ENCODE measurements at regions of chr6 and their contacts with region 1.

Region 1: DNA sequence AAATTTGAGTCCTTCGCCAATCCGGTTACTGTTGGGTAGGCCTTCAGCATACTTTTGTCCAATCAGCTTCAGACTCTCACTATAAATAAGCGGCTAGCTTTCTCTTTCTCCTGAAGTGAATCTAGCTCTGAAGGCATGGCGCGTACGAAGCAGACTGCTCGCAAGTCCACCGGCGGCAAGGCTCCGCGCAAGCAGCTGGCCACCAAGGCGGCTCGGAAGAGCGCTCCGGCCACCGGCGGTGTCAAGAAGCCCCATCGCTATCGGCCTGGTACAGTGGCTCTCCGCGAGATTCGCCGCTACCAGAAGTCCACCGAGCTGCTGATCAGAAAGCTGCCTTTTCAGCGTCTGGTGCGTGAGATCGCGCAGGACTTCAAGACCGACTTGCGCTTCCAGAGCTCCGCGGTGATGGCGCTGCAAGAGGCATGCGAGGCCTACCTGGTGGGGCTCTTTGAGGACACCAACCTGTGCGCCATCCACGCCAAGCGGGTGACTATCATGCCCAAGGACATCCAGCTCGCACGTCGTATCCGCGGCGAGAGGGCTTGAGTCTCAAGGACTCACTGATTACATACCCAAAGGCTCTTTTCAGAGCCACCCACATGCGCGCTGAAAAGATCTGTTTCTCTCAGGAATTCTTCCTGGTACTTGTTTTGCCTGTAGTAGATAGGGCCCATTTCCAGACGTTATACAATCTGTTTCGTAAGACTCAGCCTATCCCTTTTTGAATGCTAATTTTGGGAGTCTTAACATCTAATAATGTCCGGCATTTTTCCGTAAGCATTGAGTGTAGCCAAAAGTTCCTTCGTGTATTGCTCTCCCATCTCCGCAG is 102.0 kb downstream of the OR2B2 start:
- DNase-seq: peak; percentile 85 to 94 (median 92)
- H3K4me3 ChIP-seq: peak overlapping the region; percentile 31 to 67
- H3K4me3 Mint-ChIP-seq: peak overlapping the region; percentile 92 to 99 (median 96)
- H3K27ac ChIP-seq: peak overlapping the region; percentile 79
- H3K27ac Mint-ChIP-seq: peak overlapping the region; percentile 94 to 98 (median 97)
- H3K4me1 ChIP-seq: peaks cover 49% of the 10 kb centered on the region
- H3K4me1 Mint-ChIP-seq: peaks cover 39 to 74% (median 50%) of the 10 kb centered on the region in 4 donors
- H3K27me3 ChIP-seq: no peaks in the 10 kb centered on the region
- H3K27me3 Mint-ChIP-seq: no peaks in the 10 kb centered on the region

Region 2: GRCh38 chr6:26054857-26055669 is 1755.1 kb before region 1 on chr6:
- CTCF ChIA-PET with region 1: no interaction called
- POLR2A ChIA-PET with region 1: interaction called, 11 read pairs
- intact Hi-C with region 1: no loop called
- DNase-seq: peak; percentile 89 to 96 (median 91)
- H3K4me3 ChIP-seq: peak overlapping the region; percentile 67 to 78
- H3K4me3 Mint-ChIP-seq: peak overlapping the region; percentile 93 to 96 (median 94)
- H3K27ac ChIP-seq: peak overlapping the region; percentile 84
- H3K27ac Mint-ChIP-seq: peak overlapping the region; percentile 91 to 98 (median 98)
- H3K4me1 ChIP-seq: peaks cover 24% of the 10 kb centered on the region
- H3K4me1 Mint-ChIP-seq: peaks cover 7 to 34% (median 15%) of the 10 kb centered on the region in 4 donors
- H3K27me3 ChIP-seq: no peaks in the 10 kb centered on the region
- H3K27me3 Mint-ChIP-seq: no peaks in the 10 kb centered on the region

Region 3: GRCh38 chr6:26249957-26250697 is 1560.0 kb before region 1 on chr6:
- CTCF ChIA-PET with region 1: no interaction called
- POLR2A ChIA-PET with region 1: interaction called, 14 read pairs
- intact Hi-C with region 1: no loop called
- DNase-seq: peak; percentile 79 to 88 (median 83)
- H3K4me3 ChIP-seq: peak overlapping the region; percentile 86 to 88
- H3K4me3 Mint-ChIP-seq: peak overlapping the region; percentile 92 to 99 (median 98)
- H3K27ac ChIP-seq: peak overlapping the region; percentile 59
- H3K27ac Mint-ChIP-seq: peak overlapping the region; percentile 85 to 97 (median 94)
- H3K4me1 ChIP-seq: peaks cover 25% of the 10 kb centered on the region
- H3K4me1 Mint-ChIP-seq: peaks cover 28 to 53% (median 40%) of the 10 kb centered on the region in 4 donors
- H3K27me3 ChIP-seq: no peaks in the 10 kb centered on the region
- H3K27me3 Mint-ChIP-seq: no peaks in the 10 kb centered on the region

Region 4: GRCh38 chr6:27132532-27133280 is 677.4 kb before region 1 on chr6:
- CTCF ChIA-PET with region 1: interaction called, 7 read pairs
- POLR2A ChIA-PET with region 1: interaction called, 143 read pairs
- intact Hi-C with region 1: loop called (anchors 1 kb)
- DNase-seq: peak; percentile 96 to 99 (median 98)
- H3K4me3 ChIP-seq: peak overlapping the region; percentile 72 to 90
- H3K4me3 Mint-ChIP-seq: no peak overlapping the region
- H3K27ac ChIP-seq: peak overlapping the region; percentile 93
- H3K27ac Mint-ChIP-seq: no peak overlapping the region
- H3K4me1 ChIP-seq: peaks cover 27% of the 10 kb centered on the region
- H3K4me1 Mint-ChIP-seq: peaks cover 0 to 24% (median 10%) of the 10 kb centered on the region in 4 donors
- H3K27me3 ChIP-seq: no peaks in the 10 kb centered on the region
- H3K27me3 Mint-ChIP-seq: no peaks in the 10 kb centered on the region

Region 5: DNA sequence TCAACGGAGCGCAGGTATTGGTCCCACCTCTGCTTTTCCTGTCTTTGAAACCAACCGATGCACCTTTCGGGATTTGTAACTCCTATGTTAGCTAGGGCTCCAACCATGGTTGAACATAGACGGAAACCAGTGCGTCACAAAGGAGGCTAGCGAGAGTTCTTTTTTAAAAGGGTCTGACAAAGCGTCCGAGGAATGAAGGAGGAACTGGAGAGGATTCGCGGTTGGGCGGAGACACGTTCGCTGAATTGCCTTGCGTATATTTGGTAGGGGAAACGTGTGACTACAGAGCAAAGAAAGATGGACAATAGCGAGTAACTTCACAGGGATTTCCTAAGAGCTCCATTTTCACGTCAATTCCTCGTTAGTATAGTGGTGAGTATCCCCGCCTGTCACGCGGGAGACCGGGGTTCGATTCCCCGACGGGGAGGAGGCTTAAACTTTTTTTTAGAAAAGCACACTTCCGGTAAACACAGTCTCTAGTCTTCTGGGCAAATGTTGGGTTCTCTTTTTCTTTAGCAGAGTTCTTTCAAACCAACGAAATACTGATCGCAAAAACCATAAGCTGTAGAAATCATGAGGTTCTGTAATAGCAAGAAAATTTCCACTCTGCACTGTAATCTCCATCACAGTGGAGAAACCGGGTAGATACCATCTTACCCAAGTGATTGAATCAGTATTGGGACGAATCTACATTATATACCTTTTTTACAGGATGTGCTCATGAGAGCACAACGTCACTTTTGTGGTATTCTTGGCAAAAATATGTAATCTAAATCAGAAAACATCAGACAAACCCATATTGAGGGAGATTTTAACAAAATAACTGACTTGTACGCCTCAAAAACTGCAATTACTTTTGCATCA is 330.6 kb before region 1 on chr6:
- CTCF ChIA-PET with region 1: no interaction called
- POLR2A ChIA-PET with region 1: interaction called, 38 read pairs
- intact Hi-C with region 1: no loop called
- DNase-seq: peak; percentile 87 to 93 (median 92)
- H3K4me3 ChIP-seq: peak overlapping the region; percentile 88 to 93
- H3K4me3 Mint-ChIP-seq: no peak overlapping the region
- H3K27ac ChIP-seq: peak overlapping the region; percentile 85
- H3K27ac Mint-ChIP-seq: no peak overlapping the region
- H3K4me1 ChIP-seq: peaks cover 17% of the 10 kb centered on the region
- H3K4me1 Mint-ChIP-seq: peaks cover 0 to 11% (median 5%) of the 10 kb centered on the region in 4 donors
- H3K27me3 ChIP-seq: no peaks in the 10 kb centered on the region
- H3K27me3 Mint-ChIP-seq: no peaks in the 10 kb centered on the region

Region 6: DNA sequence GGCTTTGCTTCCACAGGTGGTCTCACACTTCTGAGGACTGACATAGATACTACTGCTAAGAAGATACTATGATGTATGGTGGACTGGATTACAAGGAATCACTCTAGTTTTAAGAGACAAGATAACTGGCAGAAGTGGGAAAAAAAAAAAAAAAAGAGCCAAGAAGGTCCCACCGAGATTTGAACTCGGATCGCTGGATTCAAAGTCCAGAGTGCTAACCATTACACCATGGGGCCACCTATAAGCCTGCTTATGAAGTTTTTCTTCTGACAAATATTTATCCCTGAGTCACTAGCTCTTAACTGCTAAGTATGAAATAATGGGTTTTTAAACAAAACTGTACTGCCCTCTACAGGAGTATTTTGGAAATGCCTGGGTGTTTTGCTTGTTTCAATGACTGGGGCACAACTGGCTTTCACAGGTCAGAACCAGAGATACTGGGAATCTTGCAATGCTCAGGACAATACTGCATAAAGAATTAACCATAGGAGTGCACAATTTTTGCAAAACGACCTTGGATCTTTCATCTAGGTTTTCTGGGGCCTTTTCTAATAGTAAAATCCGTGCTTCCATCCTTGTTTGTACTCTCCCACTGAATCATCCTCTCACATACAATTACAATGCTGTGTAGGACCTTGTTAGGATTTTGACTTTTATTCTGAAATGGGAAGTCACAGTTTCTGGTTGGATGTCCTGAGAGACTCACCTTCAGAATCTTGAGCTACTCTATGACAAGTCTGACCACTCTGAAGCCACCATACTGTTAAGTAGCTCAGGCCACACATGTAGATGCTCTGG is 14.3 kb before region 1 on chr6:
- CTCF ChIA-PET with region 1: interaction called, 32 read pairs
- POLR2A ChIA-PET with region 1: interaction called, 20 read pairs
- intact Hi-C with region 1: no loop called
- DNase-seq: peak; percentile 75 to 82 (median 80)
- H3K4me3 ChIP-seq: no peak overlapping the region
- H3K4me3 Mint-ChIP-seq: peak overlapping the region in 1 of 8 donors; percentile 16
- H3K27ac ChIP-seq: no peak overlapping the region
- H3K27ac Mint-ChIP-seq: peak overlapping the region in 5 of 7 donors; percentile 6 to 91 (median 35)
- H3K4me1 ChIP-seq: peaks cover 21% of the 10 kb centered on the region
- H3K4me1 Mint-ChIP-seq: peaks cover 17 to 29% (median 21%) of the 10 kb centered on the region in 4 donors
- H3K27me3 ChIP-seq: peaks cover 6% of the 10 kb centered on the region
- H3K27me3 Mint-ChIP-seq: peaks cover 6 to 13% of the 10 kb centered on the region in 2 donors

Region 7: DNA sequence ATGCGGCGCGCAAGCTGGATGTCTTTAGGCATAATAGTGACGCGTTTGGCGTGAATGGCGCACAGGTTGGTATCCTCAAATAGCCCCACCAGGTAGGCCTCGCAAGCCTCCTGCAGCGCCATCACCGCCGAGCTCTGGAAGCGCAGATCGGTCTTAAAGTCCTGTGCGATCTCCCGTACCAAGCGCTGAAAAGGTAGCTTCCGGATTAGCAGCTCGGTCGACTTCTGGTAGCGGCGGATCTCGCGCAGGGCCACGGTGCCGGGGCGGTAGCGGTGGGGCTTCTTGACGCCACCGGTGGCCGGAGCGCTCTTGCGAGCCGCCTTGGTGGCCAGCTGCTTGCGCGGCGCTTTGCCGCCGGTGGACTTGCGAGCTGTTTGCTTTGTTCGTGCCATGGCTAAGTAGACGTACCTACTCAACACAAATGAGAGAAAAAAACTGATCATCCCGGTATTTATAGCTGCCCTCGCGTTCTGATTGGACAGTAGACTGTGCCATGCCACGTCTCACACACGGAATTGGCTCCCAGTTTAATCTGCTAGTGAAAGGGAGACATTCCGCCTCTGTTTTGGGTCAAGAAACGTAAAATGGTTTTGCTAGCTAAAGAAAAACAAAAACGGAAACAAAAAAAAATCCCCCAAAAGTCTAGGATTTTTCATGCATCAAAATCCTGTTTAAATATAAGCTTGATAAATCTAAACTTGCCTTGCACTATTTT is 61.9 kb after region 1 on chr6:
- CTCF ChIA-PET with region 1: interaction called, 74 read pairs
- POLR2A ChIA-PET with region 1: interaction called, 640 read pairs
- intact Hi-C with region 1: loop called (anchors 1 kb)
- DNase-seq: peak; percentile 91 to 96 (median 94)
- H3K4me3 ChIP-seq: peak overlapping the region; percentile 77 to 89
- H3K4me3 Mint-ChIP-seq: peak overlapping the region; percentile 87 to 94 (median 90)
- H3K27ac ChIP-seq: peak overlapping the region; percentile 86
- H3K27ac Mint-ChIP-seq: peak overlapping the region; percentile 89 to 97 (median 94)
- H3K4me1 ChIP-seq: peaks cover 33% of the 10 kb centered on the region
- H3K4me1 Mint-ChIP-seq: peaks cover 24 to 48% (median 33%) of the 10 kb centered on the region in 4 donors
- H3K27me3 ChIP-seq: no peaks in the 10 kb centered on the region
- H3K27me3 Mint-ChIP-seq: no peaks in the 10 kb centered on the region